CD4-positive, alpha-beta memory T cell (primary cell): ENCODE measurements at regions of chr2 and their contacts with region 1.

Region 1: DNA sequence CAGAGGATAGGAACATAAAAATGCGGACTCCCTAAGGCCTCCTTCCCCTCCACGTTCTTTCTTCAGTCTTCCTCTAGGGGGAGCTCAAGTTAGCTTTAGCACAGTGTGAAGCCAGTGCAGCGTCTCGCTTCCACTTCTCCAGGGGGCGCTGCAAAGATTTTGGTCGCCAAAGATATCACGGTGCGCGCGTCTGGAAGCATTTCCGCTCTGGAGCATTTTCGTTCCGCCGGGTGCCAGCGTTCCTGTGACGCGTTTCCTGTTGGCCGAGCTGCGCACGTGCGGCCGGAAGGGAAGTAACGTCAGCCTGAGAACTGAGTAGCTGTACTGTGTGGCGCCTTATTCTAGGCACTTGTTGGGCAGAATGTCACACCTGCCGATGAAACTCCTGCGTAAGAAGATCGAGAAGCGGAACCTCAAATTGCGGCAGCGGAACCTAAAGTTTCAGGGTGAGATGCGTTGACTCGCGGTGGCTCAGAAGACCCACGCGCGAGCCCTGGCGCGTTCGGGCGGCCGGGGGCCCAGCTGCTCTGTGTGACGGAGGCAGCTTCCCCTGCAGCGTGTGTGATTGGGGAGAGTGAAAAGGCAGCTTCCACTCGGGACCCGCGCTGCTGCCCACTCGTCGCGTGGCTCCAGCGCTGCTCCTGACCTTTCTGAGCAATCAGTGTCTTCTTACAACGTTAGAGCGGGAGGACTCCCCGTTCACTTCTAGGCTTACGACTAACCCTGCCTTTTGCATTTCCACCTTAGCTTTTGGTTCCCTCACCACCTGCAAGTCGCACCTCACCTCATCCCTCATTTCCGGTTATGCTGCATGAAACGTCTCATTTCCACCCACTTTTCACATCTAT is at the start of gene DDX18:
- DNase-seq: peak; percentile 98 to 99 (median 98)
- H3K4me3 ChIP-seq: peak within 1 kb of the TSS; percentile 77 to 91
- H3K4me3 Mint-ChIP-seq: peak within 1 kb of the TSS; percentile 86 to 99 (median 95)
- H3K27ac ChIP-seq: peak within 1 kb of the TSS; percentile 92
- H3K27ac Mint-ChIP-seq: peak within 1 kb of the TSS; percentile 95 to 100 (median 100)
- H3K4me1 ChIP-seq: peaks cover 35% of the 10 kb centered on the region
- H3K4me1 Mint-ChIP-seq: peaks cover 25 to 50% (median 38%) of the 10 kb centered on the region in 4 donors
- H3K27me3 ChIP-seq: no peaks in the 10 kb centered on the region
- H3K27me3 Mint-ChIP-seq: no peaks in the 10 kb centered on the region
- total RNA-seq, gene DDX18: 105 to 111 TPM

Region 2: GRCh38 chr2:117679952-117680351 is 134.7 kb before region 1 on chr2:
- CTCF ChIA-PET with region 1: no interaction called
- POLR2A ChIA-PET with region 1: no interaction called
- intact Hi-C with region 1: no loop called
- DNase-seq: no peak
- H3K4me3 ChIP-seq: no peak overlapping the region
- H3K4me3 Mint-ChIP-seq: no peak overlapping the region
- H3K27ac ChIP-seq: no peak overlapping the region
- H3K27ac Mint-ChIP-seq: no peak overlapping the region
- H3K4me1 ChIP-seq: no peaks in the 10 kb centered on the region
- H3K4me1 Mint-ChIP-seq: no peaks in the 10 kb centered on the region
- H3K27me3 ChIP-seq: no peaks in the 10 kb centered on the region
- H3K27me3 Mint-ChIP-seq: peaks cover 2 to 7% of the 10 kb centered on the region in 2 donors

Region 3: DNA sequence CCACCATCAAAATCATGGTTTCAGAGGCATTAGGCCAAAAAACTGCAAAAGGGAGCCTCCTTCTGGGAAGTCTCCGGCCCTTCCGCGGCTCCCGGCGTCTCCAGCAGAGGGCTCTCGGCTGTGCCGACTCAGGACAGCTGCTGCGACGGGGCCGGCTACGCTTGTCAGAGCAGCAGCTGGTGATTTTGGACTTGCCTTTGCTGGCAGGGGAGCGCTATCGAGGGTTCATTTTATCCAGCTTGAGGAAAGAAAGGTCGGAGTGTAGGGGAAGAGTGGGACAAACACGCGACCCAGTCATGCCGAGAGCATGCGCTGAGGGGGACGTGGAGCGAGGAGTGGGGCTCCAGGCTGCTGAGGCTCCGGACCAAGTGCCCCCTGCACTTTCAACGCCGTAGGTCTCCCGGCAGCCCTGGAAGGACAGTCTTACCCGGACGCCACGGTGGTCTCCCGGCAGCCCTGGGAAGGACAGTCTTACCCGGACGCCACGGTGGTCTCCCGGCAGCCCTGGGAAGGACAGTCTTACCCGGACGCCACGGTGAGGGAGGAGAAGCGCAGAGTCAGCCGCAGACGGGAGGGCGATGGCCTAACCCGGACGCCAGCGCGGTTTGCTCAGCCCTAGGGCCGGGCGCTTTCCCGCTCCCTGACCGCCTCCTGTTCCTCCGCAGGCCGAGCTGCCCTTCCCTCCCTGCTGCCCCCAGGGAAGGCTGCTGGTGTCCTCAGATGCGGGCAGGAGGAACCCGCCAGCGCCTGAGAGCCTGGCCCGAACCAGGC is 21.5 kb after region 1 on chr2:
- CTCF ChIA-PET with region 1: interaction called, 15 read pairs
- POLR2A ChIA-PET with region 1: interaction called, 8 read pairs
- intact Hi-C with region 1: no loop called
- DNase-seq: peak in 4 of 5 donors; percentile 20 to 39 (median 37)
- H3K4me3 ChIP-seq: no peak overlapping the region
- H3K4me3 Mint-ChIP-seq: peak overlapping the region; percentile 70 to 88 (median 78)
- H3K27ac ChIP-seq: no peak overlapping the region
- H3K27ac Mint-ChIP-seq: peak overlapping the region in 4 of 7 donors; percentile 53 to 92 (median 78)
- H3K4me1 ChIP-seq: no peaks in the 10 kb centered on the region
- H3K4me1 Mint-ChIP-seq: peaks cover 3 to 22% (median 10%) of the 10 kb centered on the region in 4 donors
- H3K27me3 ChIP-seq: no peaks in the 10 kb centered on the region
- H3K27me3 Mint-ChIP-seq: no peaks in the 10 kb centered on the region

Region 4: DNA sequence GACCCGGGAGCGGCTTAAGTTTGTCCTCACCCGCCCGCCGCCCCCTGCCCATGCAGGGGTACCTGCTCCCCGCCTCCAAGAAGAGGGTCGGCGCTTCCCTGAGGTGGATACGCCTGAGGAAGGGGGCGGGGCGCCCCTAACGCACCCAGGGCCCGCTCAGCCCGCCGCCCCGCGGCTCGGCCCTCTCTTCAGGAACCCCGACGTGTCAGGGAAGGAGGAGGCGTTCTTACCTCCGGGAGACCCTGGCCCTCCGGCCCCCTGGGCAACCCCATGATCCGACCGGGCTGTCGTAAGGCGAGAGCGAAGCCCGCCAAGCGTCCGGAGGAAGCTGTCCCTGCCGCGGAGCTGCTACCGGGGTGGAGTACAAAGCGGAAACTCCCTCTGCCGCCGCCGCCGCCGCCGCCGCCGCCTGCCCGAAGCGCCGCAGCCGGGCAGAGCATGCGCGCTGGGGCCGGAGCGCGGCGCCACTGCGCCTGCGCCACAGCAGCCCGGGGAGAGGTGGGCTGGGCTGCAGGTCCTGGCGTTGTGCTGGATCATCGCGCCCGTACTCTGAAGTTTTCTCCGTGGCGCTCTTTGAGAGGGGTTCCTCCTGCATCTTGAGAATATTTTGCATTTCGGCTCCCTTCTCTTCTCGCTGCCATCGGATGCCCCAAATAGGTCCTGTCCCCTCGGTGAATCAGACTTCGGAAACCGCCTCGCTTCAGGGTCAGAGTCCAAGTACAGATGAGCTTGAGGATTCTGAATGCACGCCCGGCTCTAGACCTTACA is 199.3 kb after region 1 on chr2 and contains the start of gene CCDC93:
- CTCF ChIA-PET with region 1: interaction called, 25 read pairs
- POLR2A ChIA-PET with region 1: interaction called, 7 read pairs
- intact Hi-C with region 1: loop called (anchors 1 kb)
- DNase-seq: peak; percentile 85 to 94 (median 91)
- H3K4me3 ChIP-seq: peak within 1 kb of the TSS; percentile 57 to 95
- H3K4me3 Mint-ChIP-seq: peak within 1 kb of the TSS; percentile 94 to 98 (median 96)
- H3K27ac ChIP-seq: peak within 1 kb of the TSS; percentile 98
- H3K27ac Mint-ChIP-seq: peak within 1 kb of the TSS; percentile 90 to 97 (median 95)
- H3K4me1 ChIP-seq: peaks cover 35% of the 10 kb centered on the region
- H3K4me1 Mint-ChIP-seq: peaks cover 26 to 47% (median 34%) of the 10 kb centered on the region in 4 donors
- H3K27me3 ChIP-seq: no peaks in the 10 kb centered on the region
- H3K27me3 Mint-ChIP-seq: no peaks in the 10 kb centered on the region
- total RNA-seq, gene CCDC93: 73.1 to 73.3 TPM

Region 5: GRCh38 chr2:118186110-118186857 is 371.6 kb after region 1 on chr2:
- CTCF ChIA-PET with region 1: interaction called, 4 read pairs
- POLR2A ChIA-PET with region 1: interaction called, 3 read pairs
- intact Hi-C with region 1: loop called (anchors 1 kb)
- DNase-seq: peak; percentile 82 to 89 (median 88)
- H3K4me3 ChIP-seq: peak overlapping the region; percentile 73 to 80
- H3K4me3 Mint-ChIP-seq: peak overlapping the region; percentile 93 to 99 (median 96)
- H3K27ac ChIP-seq: peak overlapping the region; percentile 57
- H3K27ac Mint-ChIP-seq: peak overlapping the region; percentile 87 to 99 (median 95)
- H3K4me1 ChIP-seq: peaks cover 6% of the 10 kb centered on the region
- H3K4me1 Mint-ChIP-seq: peaks cover 15 to 25% (median 18%) of the 10 kb centered on the region in 4 donors
- H3K27me3 ChIP-seq: no peaks in the 10 kb centered on the region
- H3K27me3 Mint-ChIP-seq: no peaks in the 10 kb centered on the region

Region 6: GRCh38 chr2:119366649-119367471 is 1552.2 kb after region 1 on chr2 and contains the starts of genes C2orf76 and DBI:
- CTCF ChIA-PET with region 1: interaction called, 7 read pairs
- POLR2A ChIA-PET with region 1: interaction called, 3 read pairs
- intact Hi-C with region 1: loop called (anchors 1 kb)
- DNase-seq: peak; percentile 89 to 90 (median 89)
- H3K4me3 ChIP-seq: peak within 1 kb of the TSS; percentile 95 to 97
- H3K4me3 Mint-ChIP-seq: peak within 1 kb of the TSS; percentile 94 to 99 (median 96)
- H3K27ac ChIP-seq: peak within 1 kb of the TSS; percentile 92
- H3K27ac Mint-ChIP-seq: peak within 1 kb of the TSS; percentile 89 to 98 (median 94)
- H3K4me1 ChIP-seq: peaks cover 31% of the 10 kb centered on the region
- H3K4me1 Mint-ChIP-seq: peaks cover 32 to 52% (median 40%) of the 10 kb centered on the region in 4 donors
- H3K27me3 ChIP-seq: no peaks in the 10 kb centered on the region
- H3K27me3 Mint-ChIP-seq: no peaks in the 10 kb centered on the region
- total RNA-seq, gene C2orf76: 8.8 to 9.6 TPM
- total RNA-seq, gene DBI: 44.7 to 51.5 TPM

Region 7: GRCh38 chr2:119759451-119760236 is 1945.0 kb after region 1 on chr2 and contains the start of gene PTPN4:
- CTCF ChIA-PET with region 1: no interaction called
- POLR2A ChIA-PET with region 1: interaction called, 5 read pairs
- intact Hi-C with region 1: loop called (anchors 5 kb)
- DNase-seq: peak; percentile 94 to 98 (median 98)
- H3K4me3 ChIP-seq: peak within 1 kb of the TSS; percentile 82 to 88
- H3K4me3 Mint-ChIP-seq: peak within 1 kb of the TSS; percentile 93 to 97 (median 95)
- H3K27ac ChIP-seq: peak within 1 kb of the TSS; percentile 78
- H3K27ac Mint-ChIP-seq: peak within 1 kb of the TSS; percentile 88 to 94 (median 92)
- H3K4me1 ChIP-seq: peaks cover 50% of the 10 kb centered on the region
- H3K4me1 Mint-ChIP-seq: peaks cover 30 to 58% (median 37%) of the 10 kb centered on the region in 4 donors
- H3K27me3 ChIP-seq: no peaks in the 10 kb centered on the region
- H3K27me3 Mint-ChIP-seq: no peaks in the 10 kb centered on the region
- total RNA-seq, gene PTPN4: 83.1 to 88.3 TPM